Dendritic cell treated with granulocyte-macrophage colony-stimulating factor and Interleukin-4, amounts not matched to agents 40 ng/mL and 50 ng/mL, for 4 days (primary cell): ENCODE measurements at regions of chr12 and their contacts with region 1.

Region 1: DNA sequence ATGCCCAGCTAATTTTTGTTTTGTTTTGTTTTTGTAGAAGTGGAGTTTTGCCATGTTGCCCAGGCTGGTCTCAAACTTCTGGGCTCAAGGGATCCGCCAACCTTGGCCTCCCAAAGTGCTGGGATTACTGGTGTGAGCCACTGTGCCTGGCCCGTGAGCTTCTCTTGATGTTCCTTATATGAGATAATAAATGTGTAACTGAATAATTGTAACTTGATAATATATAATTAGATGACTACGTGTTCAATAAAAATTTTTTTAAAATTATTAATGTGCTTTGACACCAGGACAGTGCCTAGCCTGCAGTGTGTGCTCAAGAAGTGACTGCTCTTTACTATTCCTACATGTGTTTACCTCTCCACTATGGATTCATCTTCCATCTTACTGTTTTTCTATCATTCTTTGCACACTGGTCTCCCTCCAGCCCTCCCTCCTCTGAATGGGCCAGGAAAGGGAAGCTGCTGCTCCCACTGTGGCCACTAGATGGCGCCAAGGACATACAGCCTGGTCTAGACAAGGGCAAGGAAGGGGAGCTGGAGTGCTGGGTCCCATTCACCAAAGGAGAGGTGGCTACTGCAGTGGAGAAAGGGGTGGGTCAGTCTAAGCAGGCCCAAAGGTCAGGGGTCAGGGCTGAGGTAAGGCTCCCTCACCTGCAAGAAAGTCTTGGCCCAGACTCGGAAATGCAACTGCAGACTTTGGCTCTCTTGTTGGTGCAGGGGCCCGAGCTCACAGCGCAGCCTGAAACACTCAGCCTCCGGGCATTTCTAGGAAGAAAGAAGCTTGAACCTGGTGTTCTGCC is 14.7 kb upstream of the ZNF385A start:
- H3K4me3 Mint-ChIP-seq: no peak overlapping the region
- H3K27ac Mint-ChIP-seq: no peak overlapping the region
- H3K4me1 Mint-ChIP-seq: peaks cover 65% of the 10 kb centered on the region
- H3K27me3 Mint-ChIP-seq: no peaks in the 10 kb centered on the region

Region 2: GRCh38 chr12:54341378-54342300 is 57.6 kb before region 1 on chr12:
- intact Hi-C with region 1: no loop called
- H3K4me3 Mint-ChIP-seq: no peak overlapping the region
- H3K27ac Mint-ChIP-seq: no peak overlapping the region
- H3K4me1 Mint-ChIP-seq: peaks cover 38% of the 10 kb centered on the region
- H3K27me3 Mint-ChIP-seq: no peaks in the 10 kb centered on the region

Region 3: GRCh38 chr12:54379401-54380201 is 19.6 kb before region 1 on chr12:
- intact Hi-C with region 1: loop called (anchors 1 kb)
- H3K4me3 Mint-ChIP-seq: peak overlapping the region; percentile 70
- H3K27ac Mint-ChIP-seq: peak overlapping the region; percentile 59
- H3K4me1 Mint-ChIP-seq: peaks cover 93% of the 10 kb centered on the region
- H3K27me3 Mint-ChIP-seq: no peaks in the 10 kb centered on the region

Region 4: GRCh38 chr12:54439521-54440255 is 40.5 kb after region 1 on chr12:
- intact Hi-C with region 1: loop called (anchors 1 kb)
- H3K4me3 Mint-ChIP-seq: no peak overlapping the region
- H3K27ac Mint-ChIP-seq: no peak overlapping the region
- H3K4me1 Mint-ChIP-seq: peaks cover 29% of the 10 kb centered on the region
- H3K27me3 Mint-ChIP-seq: no peaks in the 10 kb centered on the region

Region 5: DNA sequence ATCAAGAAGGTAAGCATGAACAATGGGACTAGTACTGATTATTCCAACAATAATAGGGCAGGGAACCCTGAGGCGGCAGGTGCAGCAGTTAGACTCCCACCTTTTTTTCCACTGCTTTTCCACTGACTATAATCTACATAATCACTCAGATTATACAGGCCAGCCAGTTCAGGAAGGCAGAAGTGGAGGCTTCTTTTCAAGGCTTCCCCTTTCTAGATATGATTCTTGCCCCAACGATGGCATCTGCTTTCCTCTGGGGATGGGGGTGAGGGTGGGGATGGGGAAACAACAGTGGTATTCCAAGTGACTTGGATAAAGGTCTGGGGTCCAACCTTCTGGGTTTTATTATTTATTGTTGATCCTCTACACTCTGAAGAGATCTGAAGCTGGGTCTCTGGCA is 98.7 kb after region 1 on chr12:
- intact Hi-C with region 1: loop called (anchors 10 kb)
- H3K4me3 Mint-ChIP-seq: peak overlapping the region; percentile 78
- H3K27ac Mint-ChIP-seq: peak overlapping the region; percentile 91
- H3K4me1 Mint-ChIP-seq: peaks cover 49% of the 10 kb centered on the region
- H3K27me3 Mint-ChIP-seq: no peaks in the 10 kb centered on the region

Region 6: GRCh38 chr12:54749191-54749818 is 350.1 kb after region 1 on chr12:
- intact Hi-C with region 1: no loop called
- H3K4me3 Mint-ChIP-seq: no peak overlapping the region
- H3K27ac Mint-ChIP-seq: no peak overlapping the region
- H3K4me1 Mint-ChIP-seq: peaks cover 9% of the 10 kb centered on the region
- H3K27me3 Mint-ChIP-seq: no peaks in the 10 kb centered on the region